Endothelial cell of umbilical vein (primary cell): ENCODE measurements at regions of chr11 and their contacts with region 1.

Region 1: GRCh38 chr11:19553683-19554333 is 158.8 kb upstream of the NAV2 start:
- DNase-seq: peak; percentile 65
- H3K4me3 ChIP-seq: no peak overlapping the region
- H3K27ac ChIP-seq: no peak overlapping the region
- H3K4me1 ChIP-seq: no peaks in the 10 kb centered on the region
- H3K27me3 ChIP-seq: no peaks in the 10 kb centered on the region
- CTCF ChIP-seq: peak; percentile 79 to 81
- POLR2A ChIP-seq: no peak

Region 2: DNA sequence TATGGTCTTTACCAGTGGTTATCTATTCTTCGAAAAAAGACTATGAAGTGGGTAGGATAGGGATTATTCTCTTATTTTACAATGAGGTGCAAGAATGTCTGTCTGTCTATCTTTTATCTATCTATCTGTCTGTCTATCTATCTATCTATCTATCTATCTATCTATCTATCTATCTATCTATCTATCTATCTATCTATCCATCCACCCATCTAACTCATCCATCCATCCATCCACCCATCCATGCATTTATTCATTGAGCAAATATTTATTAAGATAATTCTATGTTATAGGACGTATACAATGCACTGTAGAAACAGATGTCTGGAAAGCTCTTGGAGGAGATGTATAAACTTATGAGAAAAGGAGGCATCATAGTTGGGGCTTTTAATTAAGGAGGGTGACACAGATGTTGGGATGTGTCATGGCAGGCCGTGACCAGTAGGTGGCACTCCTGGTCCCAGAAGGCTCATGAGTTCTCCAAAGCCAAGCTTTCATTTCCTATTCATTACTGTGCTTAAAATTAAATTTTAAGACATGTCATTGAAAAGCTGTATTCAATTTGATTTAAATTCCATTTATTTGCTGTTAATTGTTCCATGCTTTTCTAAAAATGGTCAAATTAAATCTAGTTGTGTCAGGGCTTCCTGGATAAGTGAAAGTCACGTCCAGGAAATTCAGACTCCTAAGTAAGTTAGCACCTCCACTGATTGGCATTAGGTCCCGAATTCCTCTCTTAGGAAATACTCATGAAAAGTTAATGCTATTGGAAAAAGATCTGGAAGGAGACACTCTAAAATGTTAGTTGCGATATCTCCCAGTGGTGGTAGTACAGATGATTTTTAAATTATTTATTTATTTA is 294.1 kb before region 1 on chr11:
- CTCF ChIA-PET with region 1: interaction called, 26 read pairs
- POLR2A ChIA-PET with region 1: no interaction called
- dilution Hi-C with region 1: no loop called
- intact Hi-C with region 1: loop called (anchors 1 kb)
- DNase-seq: peak; percentile 73
- H3K4me3 ChIP-seq: peak overlapping the region in 1 of 3 experiments; percentile 30
- H3K27ac ChIP-seq: no peak overlapping the region
- H3K4me1 ChIP-seq: no peaks in the 10 kb centered on the region
- H3K27me3 ChIP-seq: peaks cover 9 to 11% of the 10 kb centered on the region in 2 experiments
- CTCF ChIP-seq: peak; percentile 87 to 95
- POLR2A ChIP-seq: no peak

Region 3: DNA sequence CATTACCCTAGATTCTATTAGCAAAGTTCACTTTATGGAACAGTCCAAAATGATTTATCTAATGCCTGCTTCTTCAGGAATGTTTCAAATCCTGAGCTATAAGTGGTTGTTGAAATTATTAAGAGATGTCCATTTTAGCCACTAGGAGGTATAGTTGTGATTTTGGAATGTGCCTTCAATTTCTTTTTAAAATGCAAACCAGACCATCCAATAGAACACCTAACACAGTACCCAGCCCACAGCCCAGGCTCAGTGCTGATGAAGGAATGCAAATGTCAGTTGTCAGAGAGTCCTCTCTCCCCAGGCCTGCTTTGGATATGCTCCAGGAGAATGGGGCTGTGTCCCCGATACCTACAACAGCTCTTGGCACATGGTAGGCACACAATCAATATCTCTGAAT is 227.3 kb before region 1 on chr11:
- CTCF ChIA-PET with region 1: interaction called, 102 read pairs
- POLR2A ChIA-PET with region 1: no interaction called
- dilution Hi-C with region 1: no loop called
- intact Hi-C with region 1: loop called (anchors 1 kb)
- DNase-seq: peak; percentile 47
- H3K4me3 ChIP-seq: no peak overlapping the region
- H3K27ac ChIP-seq: no peak overlapping the region
- H3K4me1 ChIP-seq: no peaks in the 10 kb centered on the region
- H3K27me3 ChIP-seq: peaks cover 0 to 5% of the 10 kb centered on the region in 2 experiments
- CTCF ChIP-seq: peak; percentile 17
- POLR2A ChIP-seq: no peak

Region 4: DNA sequence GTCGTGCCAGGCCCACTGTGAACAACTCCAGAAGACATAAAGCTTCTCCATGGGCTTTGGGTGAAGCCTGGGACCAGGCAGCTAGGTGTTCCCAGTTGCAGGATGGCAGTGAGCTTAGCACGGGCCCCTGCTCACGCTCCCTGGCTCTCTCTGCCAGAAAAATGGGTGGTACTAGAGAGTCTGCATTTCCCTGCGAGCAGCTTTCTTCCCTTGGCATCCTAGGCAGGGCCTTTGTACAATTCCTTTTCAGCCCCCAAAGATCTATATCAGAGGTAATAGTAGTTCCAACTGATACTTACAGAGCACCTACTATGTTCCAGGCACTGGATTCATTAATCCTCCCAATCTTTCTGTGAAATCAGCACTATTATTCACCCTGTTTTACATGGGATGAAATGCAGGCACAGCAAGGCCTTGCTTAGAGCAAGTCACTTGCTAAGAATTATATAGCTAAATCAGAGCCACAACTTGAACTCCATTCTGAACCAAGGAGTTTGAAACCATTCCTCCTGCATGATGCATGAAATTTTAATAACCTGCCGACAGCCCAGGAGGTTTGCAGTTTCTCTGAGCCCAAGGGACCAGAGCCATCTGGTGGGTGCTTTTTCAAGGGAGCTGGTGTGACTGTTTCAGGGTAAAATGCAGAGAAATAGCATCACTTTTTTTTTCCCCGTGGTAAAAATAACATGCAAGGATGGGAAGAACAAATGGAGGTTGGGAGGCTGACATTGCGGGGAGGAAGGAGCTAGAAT is 181.5 kb after region 1 on chr11:
- CTCF ChIA-PET with region 1: interaction called, 21 read pairs
- POLR2A ChIA-PET with region 1: no interaction called
- dilution Hi-C with region 1: no loop called
- intact Hi-C with region 1: no loop called
- DNase-seq: no peak
- H3K4me3 ChIP-seq: no peak overlapping the region
- H3K27ac ChIP-seq: no peak overlapping the region
- H3K4me1 ChIP-seq: peaks cover 5% of the 10 kb centered on the region
- H3K27me3 ChIP-seq: no peaks in the 10 kb centered on the region
- CTCF ChIP-seq: no peak
- POLR2A ChIP-seq: no peak

Region 5: GRCh38 chr11:19808076-19808911 is 254.5 kb after region 1 on chr11:
- CTCF ChIA-PET with region 1: interaction called, 5 read pairs
- POLR2A ChIA-PET with region 1: no interaction called
- dilution Hi-C with region 1: no loop called
- intact Hi-C with region 1: loop called (anchors 1 kb)
- DNase-seq: peak; percentile 31
- H3K4me3 ChIP-seq: no peak overlapping the region
- H3K27ac ChIP-seq: no peak overlapping the region
- H3K4me1 ChIP-seq: peaks cover 4% of the 10 kb centered on the region
- H3K27me3 ChIP-seq: no peaks in the 10 kb centered on the region
- CTCF ChIP-seq: no peak
- POLR2A ChIP-seq: no peak